Activated CD4-positive, alpha-beta T cell treated with anti-CD3 and anti-CD28 coated beads for 36 hours (primary cell): ENCODE measurements at regions of chr20 and their contacts with region 1.

Region 1: DNA sequence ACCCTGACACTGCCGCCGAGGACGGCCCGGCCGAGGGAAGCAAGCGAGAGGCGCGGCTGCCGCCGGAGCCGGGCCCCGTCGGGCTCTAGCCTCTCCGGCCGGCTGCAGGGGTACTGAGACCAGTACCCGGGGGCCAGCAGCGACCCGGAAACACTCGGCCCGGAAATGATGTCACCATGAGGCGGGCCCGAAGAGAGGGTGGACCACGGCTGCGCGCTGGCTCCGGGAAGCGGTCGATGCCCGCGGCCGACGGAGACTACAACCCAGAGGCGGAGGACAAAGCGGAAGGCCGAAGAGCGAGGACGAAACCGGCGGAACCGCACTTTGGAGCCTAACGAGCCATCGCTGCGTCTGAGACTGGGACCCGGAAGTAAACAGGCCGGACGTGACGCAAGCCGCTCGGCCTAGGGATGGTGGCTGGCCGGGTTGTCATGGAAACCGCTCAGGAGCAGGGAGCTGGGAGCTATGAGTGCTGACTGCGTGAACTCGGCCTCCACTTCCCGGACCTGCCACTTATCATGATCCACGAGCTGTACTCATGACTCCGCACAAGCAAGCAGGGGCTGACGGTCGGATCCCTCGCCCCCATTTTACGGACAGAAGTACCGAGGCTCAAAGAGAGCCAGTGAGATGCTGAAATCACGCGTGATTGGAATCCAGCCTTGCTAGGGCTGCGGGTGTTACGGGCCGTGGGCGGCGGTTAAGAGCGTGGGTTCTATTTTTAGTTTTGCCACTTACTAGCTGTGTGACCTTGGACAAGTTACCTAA is at the start of gene SPATA2:
- DNase-seq: peak; percentile 96
- ATAC-seq: peak; percentile 83
- H3K4me3 Mint-ChIP-seq: peak within 1 kb of the TSS; percentile 99
- H3K27ac Mint-ChIP-seq: peak within 1 kb of the TSS; percentile 100
- H3K4me1 Mint-ChIP-seq: peaks cover 27% of the 10 kb centered on the region
- H3K27me3 Mint-ChIP-seq: no peaks in the 10 kb centered on the region
- total RNA-seq, gene SPATA2: 8.7 to 10.1 TPM

Region 2: GRCh38 chr20:49046087-49046900 is 869.3 kb before region 1 on chr20 and contains the start of gene CSE1L:
- CTCF ChIA-PET with region 1: no interaction called
- POLR2A ChIA-PET with region 1: no interaction called
- intact Hi-C with region 1: loop called in 1 of 2 experiments (anchors 2 kb)
- DNase-seq: peak; percentile 97
- ATAC-seq: peak; percentile 92
- H3K4me3 Mint-ChIP-seq: peak within 1 kb of the TSS; percentile 97
- H3K27ac Mint-ChIP-seq: peak within 1 kb of the TSS; percentile 99
- H3K4me1 Mint-ChIP-seq: peaks cover 30% of the 10 kb centered on the region
- H3K27me3 Mint-ChIP-seq: no peaks in the 10 kb centered on the region
- total RNA-seq, gene CSE1L: 119 to 126 TPM

Region 3: DNA sequence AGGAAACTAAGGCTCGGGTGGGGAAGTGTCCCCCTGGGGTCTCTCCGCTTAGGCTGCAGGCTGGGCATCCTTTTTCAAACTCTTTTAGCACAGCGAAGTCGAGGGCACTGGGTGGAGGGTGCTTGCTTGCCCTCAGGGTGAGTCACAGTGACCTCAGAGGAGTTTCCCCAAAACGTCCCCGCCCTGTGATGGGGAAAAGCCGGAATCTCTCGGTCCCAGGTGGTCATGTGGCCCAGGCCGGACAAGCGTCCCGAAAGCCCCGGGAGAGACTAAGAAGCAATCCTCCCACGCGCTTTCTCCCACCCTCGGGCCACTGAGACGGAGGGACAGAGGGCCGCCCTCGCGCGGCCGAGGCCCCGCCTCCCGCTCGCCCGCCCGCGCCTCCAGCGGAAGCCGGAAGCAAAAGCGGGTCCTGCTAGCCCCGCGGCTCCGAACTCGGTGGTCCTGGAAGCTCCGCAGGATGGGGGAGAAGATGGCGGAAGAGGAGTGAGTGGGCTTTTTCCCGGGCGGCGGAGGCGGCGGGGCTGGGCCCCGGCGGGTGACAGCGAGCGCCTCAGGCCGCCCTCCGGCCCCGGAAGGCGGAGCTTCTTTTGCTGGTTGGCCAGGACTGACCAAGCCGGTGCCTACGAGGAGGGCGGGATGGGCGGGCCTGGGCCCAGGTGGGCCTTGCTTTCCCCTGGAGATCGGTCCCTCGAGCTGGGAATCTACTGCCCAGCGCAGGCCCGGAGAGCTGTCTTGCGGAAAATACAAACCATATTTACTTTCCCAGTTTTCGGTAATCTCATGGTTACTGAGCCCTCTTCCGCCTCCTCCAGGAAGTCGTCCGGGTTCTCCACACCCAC is 102.9 kb before region 1 on chr20 and contains the start of gene SLC9A8:
- CTCF ChIA-PET with region 1: no interaction called
- POLR2A ChIA-PET with region 1: interaction called, 3 read pairs
- intact Hi-C with region 1: loop called in 1 of 2 experiments (anchors 1 kb)
- DNase-seq: peak; percentile 89
- ATAC-seq: peak; percentile 92
- H3K4me3 Mint-ChIP-seq: peak within 1 kb of the TSS; percentile 94
- H3K27ac Mint-ChIP-seq: peak within 1 kb of the TSS; percentile 98
- H3K4me1 Mint-ChIP-seq: peaks cover 28% of the 10 kb centered on the region
- H3K27me3 Mint-ChIP-seq: no peaks in the 10 kb centered on the region
- total RNA-seq, gene SLC9A8: 12.6 to 16.7 TPM

Region 4: DNA sequence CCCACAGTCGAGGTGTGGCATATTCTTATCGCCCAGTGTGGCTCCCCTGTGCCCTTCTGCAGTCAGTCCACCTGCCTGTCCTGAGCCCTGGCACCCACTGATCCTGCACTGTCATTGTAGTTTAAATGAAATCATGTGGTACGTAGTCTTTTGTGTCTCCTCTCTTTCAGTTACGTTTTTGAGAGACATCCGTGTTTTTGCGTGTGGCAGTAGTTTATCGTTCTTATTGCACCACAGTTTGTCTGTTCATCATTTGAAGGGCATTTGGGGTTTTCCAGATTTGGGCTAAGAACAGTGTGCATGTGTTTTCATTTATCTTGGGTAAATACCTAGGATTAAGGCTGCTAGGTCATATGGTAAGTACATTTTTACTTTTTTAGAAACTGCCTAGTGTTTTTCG is 49.5 kb before region 1 on chr20:
- CTCF ChIA-PET with region 1: no interaction called
- POLR2A ChIA-PET with region 1: no interaction called
- intact Hi-C with region 1: no loop called
- DNase-seq: no peak
- ATAC-seq: no peak
- H3K4me3 Mint-ChIP-seq: no peak overlapping the region
- H3K27ac Mint-ChIP-seq: no peak overlapping the region
- H3K4me1 Mint-ChIP-seq: peaks cover 3% of the 10 kb centered on the region
- H3K27me3 Mint-ChIP-seq: no peaks in the 10 kb centered on the region

Region 5: GRCh38 chr20:49928401-49929141 is 13.0 kb after region 1 on chr20:
- CTCF ChIA-PET with region 1: interaction called, 6 read pairs
- POLR2A ChIA-PET with region 1: no interaction called
- intact Hi-C with region 1: loop called in 1 of 2 experiments (anchors 2 kb)
- DNase-seq: peak; percentile 90
- ATAC-seq: peak; percentile 98
- H3K4me3 Mint-ChIP-seq: no peak overlapping the region
- H3K27ac Mint-ChIP-seq: peak overlapping the region; percentile 63
- H3K4me1 Mint-ChIP-seq: peaks cover 6% of the 10 kb centered on the region
- H3K27me3 Mint-ChIP-seq: peaks cover 2% of the 10 kb centered on the region

Region 6: GRCh38 chr20:50054626-50055511 is 139.3 kb after region 1 on chr20:
- CTCF ChIA-PET with region 1: no interaction called
- POLR2A ChIA-PET with region 1: no interaction called
- intact Hi-C with region 1: no loop called
- DNase-seq: no peak
- ATAC-seq: no peak
- H3K4me3 Mint-ChIP-seq: no peak overlapping the region
- H3K27ac Mint-ChIP-seq: no peak overlapping the region
- H3K4me1 Mint-ChIP-seq: no peaks in the 10 kb centered on the region
- H3K27me3 Mint-ChIP-seq: peaks cover 4% of the 10 kb centered on the region

Region 7: DNA sequence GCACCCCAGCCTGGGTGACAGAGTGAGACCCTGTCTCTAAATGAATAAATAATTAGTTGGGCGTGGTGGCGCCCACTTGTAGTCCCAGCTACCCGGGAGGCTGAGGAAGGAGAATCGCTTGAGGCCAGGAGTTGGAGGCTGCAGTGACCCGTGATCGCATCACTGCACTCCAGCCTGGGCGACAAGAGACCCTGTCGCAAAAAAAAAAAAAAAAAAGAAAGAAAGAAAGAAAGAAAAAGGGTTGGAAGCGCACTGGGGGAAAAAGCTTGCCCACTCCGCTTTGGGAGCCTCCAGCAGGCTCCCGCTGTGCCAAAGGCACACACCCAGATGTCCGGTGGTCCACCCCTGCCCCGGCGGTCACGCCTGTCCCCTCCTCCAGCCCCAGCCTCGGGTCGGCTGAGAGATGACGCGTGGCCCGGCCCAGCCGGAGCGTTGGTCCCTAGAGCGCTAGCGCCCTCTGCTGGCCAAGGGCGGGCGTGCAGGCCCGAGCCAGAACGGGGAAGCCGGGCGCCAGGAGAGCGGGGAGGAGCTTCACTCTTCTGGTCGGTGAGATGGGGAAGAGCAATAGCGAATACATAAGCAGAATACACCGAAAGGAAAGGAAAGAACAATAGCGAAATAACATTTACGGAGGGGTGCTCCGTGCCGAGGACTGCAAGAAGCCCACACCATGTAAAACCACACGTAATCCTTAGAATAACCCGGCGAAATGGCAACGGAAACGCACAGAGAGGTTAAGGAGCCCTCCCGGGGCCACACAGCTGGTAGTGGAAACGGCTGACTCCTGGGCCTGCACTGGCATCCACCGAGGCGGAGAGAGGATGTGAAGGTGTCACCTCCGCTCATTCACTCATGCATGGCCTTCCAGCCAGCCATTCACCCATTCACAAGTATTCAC is 155.7 kb after region 1 on chr20:
- CTCF ChIA-PET with region 1: interaction called, 11 read pairs
- POLR2A ChIA-PET with region 1: no interaction called
- intact Hi-C with region 1: no loop called
- DNase-seq: peak; percentile 95
- ATAC-seq: peak; percentile 99
- H3K4me3 Mint-ChIP-seq: peak overlapping the region; percentile 61
- H3K27ac Mint-ChIP-seq: no peak overlapping the region
- H3K4me1 Mint-ChIP-seq: peaks cover 4% of the 10 kb centered on the region
- H3K27me3 Mint-ChIP-seq: no peaks in the 10 kb centered on the region